Natural killer cell (primary cell): ENCODE measurements at regions of chr7 and their contacts with region 1.

Region 1: GRCh38 chr7:17021180-17021579 is 139.4 kb upstream of the AGR3 start:
- DNase-seq: no peak
- ATAC-seq: no peak
- H3K4me3 ChIP-seq: no peak overlapping the region
- H3K4me3 Mint-ChIP-seq: no peak overlapping the region
- H3K27ac ChIP-seq: no peak overlapping the region
- H3K27ac Mint-ChIP-seq: no peak overlapping the region
- H3K4me1 ChIP-seq: no peaks in the 10 kb centered on the region
- H3K4me1 Mint-ChIP-seq: peaks cover 0 to 4% of the 10 kb centered on the region in 2 donors
- H3K27me3 ChIP-seq: no peaks in the 10 kb centered on the region
- H3K27me3 Mint-ChIP-seq: no peaks in the 10 kb centered on the region
- CTCF ChIP-seq: no peak

Region 2: GRCh38 chr7:16978358-16979244 is 42.6 kb before region 1 on chr7:
- intact Hi-C with region 1: no loop called
- DNase-seq: no peak
- ATAC-seq: no peak
- H3K4me3 ChIP-seq: no peak overlapping the region
- H3K4me3 Mint-ChIP-seq: no peak overlapping the region
- H3K27ac ChIP-seq: no peak overlapping the region
- H3K27ac Mint-ChIP-seq: no peak overlapping the region
- H3K4me1 ChIP-seq: no peaks in the 10 kb centered on the region
- H3K4me1 Mint-ChIP-seq: peaks cover 5 to 7% of the 10 kb centered on the region in 2 donors
- H3K27me3 ChIP-seq: no peaks in the 10 kb centered on the region
- H3K27me3 Mint-ChIP-seq: peaks cover 11 to 13% of the 10 kb centered on the region in 2 donors
- CTCF ChIP-seq: no peak

Region 3: DNA sequence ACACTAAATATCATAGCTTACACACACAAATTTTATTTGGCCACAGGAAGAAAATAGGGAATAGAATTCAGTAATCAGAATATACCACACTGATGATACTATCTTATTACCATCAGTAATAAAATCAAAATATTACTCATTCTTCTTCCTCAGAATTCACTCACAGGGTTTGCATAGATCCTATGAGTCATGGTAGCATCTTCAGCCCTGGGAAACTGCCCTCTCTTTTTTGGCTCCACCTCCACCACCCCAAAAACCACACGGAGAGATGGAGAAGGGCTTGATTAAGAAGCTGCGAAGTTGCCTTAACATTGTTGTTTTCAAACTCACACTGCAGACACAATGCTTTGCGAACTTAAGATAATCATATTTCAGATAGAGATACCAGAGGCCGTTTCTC is 123.1 kb after region 1 on chr7:
- intact Hi-C with region 1: loop called (anchors 10 kb)
- DNase-seq: peak; percentile 20 to 63
- ATAC-seq: peak; percentile 77 to 89 (median 79)
- H3K4me3 ChIP-seq: no peak overlapping the region
- H3K4me3 Mint-ChIP-seq: peak overlapping the region; percentile 21
- H3K27ac ChIP-seq: no peak overlapping the region
- H3K27ac Mint-ChIP-seq: peak overlapping the region; percentile 61 to 80
- H3K4me1 ChIP-seq: peaks cover 4% of the 10 kb centered on the region
- H3K4me1 Mint-ChIP-seq: peaks cover 24 to 29% of the 10 kb centered on the region in 2 donors
- H3K27me3 ChIP-seq: no peaks in the 10 kb centered on the region
- H3K27me3 Mint-ChIP-seq: no peaks in the 10 kb centered on the region
- CTCF ChIP-seq: no peak